ENCODE measurements at regions of chr1 and their contacts with region 1.

Region 1: GRCh38 chr1:228500901-228501871 is 14.0 kb downstream of the RNF187 start:
- DNase-seq: peak; percentile 97
- H3K4me3 Mint-ChIP-seq: peak overlapping the region; percentile 40
- H3K27ac Mint-ChIP-seq: peak overlapping the region; percentile 73
- H3K4me1 Mint-ChIP-seq: peaks cover 20% of the 10 kb centered on the region
- H3K27me3 Mint-ChIP-seq: no peaks in the 10 kb centered on the region

Region 2: GRCh38 chr1:228212966-228213844 is 288.0 kb before region 1 on chr1:
- CTCF ChIA-PET with region 1: no interaction called
- intact Hi-C with region 1: loop called (anchors 5 kb)
- DNase-seq: peak; percentile 92
- H3K4me3 Mint-ChIP-seq: peak overlapping the region; percentile 83
- H3K27ac Mint-ChIP-seq: peak overlapping the region; percentile 50
- H3K4me1 Mint-ChIP-seq: no peaks in the 10 kb centered on the region
- H3K27me3 Mint-ChIP-seq: no peaks in the 10 kb centered on the region

Region 3: GRCh38 chr1:228405987-228406265 is 95.3 kb before region 1 on chr1:
- CTCF ChIA-PET with region 1: interaction called, 5 read pairs
- intact Hi-C with region 1: loop called (anchors 2 kb)
- DNase-seq: peak; percentile 17
- H3K4me3 Mint-ChIP-seq: peak overlapping the region; percentile 87
- H3K27ac Mint-ChIP-seq: peak overlapping the region; percentile 73
- H3K4me1 Mint-ChIP-seq: peaks cover 43% of the 10 kb centered on the region
- H3K27me3 Mint-ChIP-seq: no peaks in the 10 kb centered on the region

Region 4: DNA sequence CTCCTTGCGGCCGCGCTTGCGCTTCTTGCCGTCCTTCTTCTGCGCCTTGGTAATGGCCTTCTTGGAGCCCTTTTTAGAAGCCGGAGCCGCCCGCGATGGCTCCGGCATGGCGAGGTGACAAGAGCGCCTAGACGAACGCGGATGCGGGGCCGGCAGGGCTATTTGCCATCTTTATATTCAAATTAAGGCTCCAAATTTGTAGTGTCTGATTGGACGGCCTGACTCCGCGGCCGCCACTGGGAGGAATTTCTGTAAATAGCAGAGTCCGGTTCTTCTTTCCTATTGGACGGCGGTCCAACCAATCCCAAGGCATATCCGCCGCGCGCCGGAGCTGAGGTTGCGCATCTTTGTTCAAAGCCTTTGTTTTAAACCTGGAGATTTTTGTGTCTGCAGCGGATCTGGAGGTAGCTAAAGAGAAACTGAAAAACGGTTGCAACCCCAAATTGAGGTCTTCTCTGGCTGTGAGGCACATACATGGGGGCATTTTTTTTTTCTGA is 36.7 kb before region 1 on chr1:
- CTCF ChIA-PET with region 1: interaction called, 8 read pairs
- intact Hi-C with region 1: loop called (anchors 1 kb)
- DNase-seq: peak; percentile 96
- H3K4me3 Mint-ChIP-seq: peak overlapping the region; percentile 91
- H3K27ac Mint-ChIP-seq: peak overlapping the region; percentile 94
- H3K4me1 Mint-ChIP-seq: peaks cover 37% of the 10 kb centered on the region
- H3K27me3 Mint-ChIP-seq: peaks cover 19% of the 10 kb centered on the region

Region 5: GRCh38 chr1:228486596-228487335 is 14.4 kb before region 1 on chr1:
- CTCF ChIA-PET with region 1: interaction called, 12 read pairs
- intact Hi-C with region 1: no loop called
- DNase-seq: peak; percentile 76
- H3K4me3 Mint-ChIP-seq: peak overlapping the region; percentile 95
- H3K27ac Mint-ChIP-seq: peak overlapping the region; percentile 97
- H3K4me1 Mint-ChIP-seq: peaks cover 31% of the 10 kb centered on the region
- H3K27me3 Mint-ChIP-seq: no peaks in the 10 kb centered on the region

Region 6: GRCh38 chr1:228691926-228692325 is 190.7 kb after region 1 on chr1:
- CTCF ChIA-PET with region 1: no interaction called
- intact Hi-C with region 1: loop called (anchors 10 kb)
- DNase-seq: peak; percentile 46
- H3K4me3 Mint-ChIP-seq: no peak overlapping the region
- H3K27ac Mint-ChIP-seq: no peak overlapping the region
- H3K4me1 Mint-ChIP-seq: peaks cover 10% of the 10 kb centered on the region
- H3K27me3 Mint-ChIP-seq: peaks cover 9% of the 10 kb centered on the region

Measured in activated naive CD4-positive, alpha-beta T cell treated with anti-CD3 and anti-CD28 coated beads for 36 hours (primary cell).